ENCODE measurements at regions of chr11 and their contacts with region 1.

Region 1: GRCh38 chr11:4626207-4627099 is 10.8 kb upstream of the OR51D1 start:
- DNase-seq: no peak
- H3K4me3 ChIP-seq: no peak overlapping the region
- H3K27ac ChIP-seq: no peak overlapping the region
- H3K4me1 ChIP-seq: no peaks in the 10 kb centered on the region
- H3K27me3 ChIP-seq: no peaks in the 10 kb centered on the region
- CTCF ChIP-seq: peak; percentile 77

Region 2: GRCh38 chr11:4826425-4826824 is 200.0 kb after region 1 on chr11:
- intact Hi-C with region 1: loop called (anchors 5 kb)
- DNase-seq: no peak
- H3K4me3 ChIP-seq: no peak overlapping the region
- H3K27ac ChIP-seq: no peak overlapping the region
- H3K4me1 ChIP-seq: no peaks in the 10 kb centered on the region
- H3K27me3 ChIP-seq: no peaks in the 10 kb centered on the region
- CTCF ChIP-seq: peak; percentile 71

Measured in left ventricle myocardium inferior (tissue), 1 donor.